ENCODE measurements at regions of chr7 and their contacts with region 1.

Region 1: DNA sequence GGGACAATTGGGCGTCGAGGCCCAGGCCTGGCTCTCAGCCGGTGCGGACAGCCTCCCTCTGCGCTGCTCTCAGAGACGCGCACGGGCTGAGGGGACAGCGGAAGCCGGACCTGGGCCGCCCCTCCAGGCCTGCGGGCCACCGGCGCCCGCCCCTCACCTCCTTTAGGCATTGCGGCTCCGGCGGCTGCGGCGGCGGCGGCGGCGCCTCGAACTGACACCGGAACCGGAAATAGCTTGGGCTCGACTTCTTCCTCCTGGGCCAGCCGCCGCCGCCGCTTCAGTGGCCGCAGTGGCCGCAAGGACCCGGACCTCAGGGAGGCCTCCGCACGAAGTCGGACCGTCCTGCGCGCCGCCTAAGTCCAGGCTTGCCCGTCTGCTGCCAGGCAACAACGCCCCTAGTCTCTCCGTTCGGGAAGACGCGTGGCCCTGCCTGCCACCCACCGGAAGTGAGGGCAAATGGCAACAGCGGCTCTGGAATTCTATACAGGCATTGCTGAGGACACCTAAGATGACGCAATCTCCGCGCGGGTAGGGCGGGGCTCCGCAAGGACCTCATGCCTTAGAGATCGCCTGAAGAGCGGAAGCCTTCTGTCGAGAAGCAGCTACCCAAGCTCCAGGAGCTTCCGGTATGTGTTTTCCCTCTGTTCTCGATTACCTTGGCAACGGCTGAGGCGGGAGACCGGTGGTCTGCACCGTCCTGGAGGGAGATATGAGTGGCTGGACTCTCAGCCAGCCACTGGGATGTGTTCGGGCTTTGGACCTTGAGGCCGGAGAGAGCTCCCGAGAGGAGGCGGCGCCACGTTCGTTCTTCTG is at the starts of genes BUD31 and PDAP1:
- DNase-seq: peak; percentile 97
- H3K4me3 Mint-ChIP-seq: peak within 1 kb of the TSS; percentile 89
- H3K27ac Mint-ChIP-seq: peak within 1 kb of the TSS; percentile 92
- H3K4me1 Mint-ChIP-seq: peaks cover 49% of the 10 kb centered on the region
- H3K27me3 Mint-ChIP-seq: no peaks in the 10 kb centered on the region
- total RNA-seq, gene BUD31: 160 to 176 TPM
- total RNA-seq, gene PDAP1: 169 to 194 TPM

Region 2: GRCh38 chr7:99143853-99144672 is 264.5 kb before region 1 on chr7 and contains the start of gene SMURF1:
- CTCF ChIA-PET with region 1: no interaction called
- intact Hi-C with region 1: loop called (anchors 1 kb)
- DNase-seq: peak; percentile 69
- H3K4me3 Mint-ChIP-seq: peak within 1 kb of the TSS; percentile 90
- H3K27ac Mint-ChIP-seq: peak within 1 kb of the TSS; percentile 75
- H3K4me1 Mint-ChIP-seq: peaks cover 38% of the 10 kb centered on the region
- H3K27me3 Mint-ChIP-seq: no peaks in the 10 kb centered on the region
- total RNA-seq, gene SMURF1: 10.1 to 11.1 TPM

Region 3: DNA sequence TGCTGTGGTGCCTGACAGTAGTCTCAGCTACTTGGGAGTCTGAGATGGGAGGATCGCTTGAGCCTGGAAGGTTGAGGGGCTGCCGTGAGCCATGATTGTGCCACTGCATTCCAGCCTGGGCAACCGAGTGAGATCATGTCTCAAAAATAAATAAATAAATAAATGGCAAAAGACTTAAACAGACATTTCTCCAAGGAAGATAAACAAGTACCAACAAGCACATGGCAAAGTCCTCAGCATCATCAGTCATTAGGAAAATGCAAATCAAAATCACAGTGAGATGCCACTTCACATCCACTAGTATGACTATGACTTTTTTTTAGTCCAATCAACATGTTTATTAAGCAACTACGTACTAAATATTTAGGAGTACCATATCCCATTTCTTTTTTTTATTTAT is 179.4 kb before region 1 on chr7:
- CTCF ChIA-PET with region 1: no interaction called
- intact Hi-C with region 1: no loop called
- DNase-seq: no peak
- H3K4me3 Mint-ChIP-seq: no peak overlapping the region
- H3K27ac Mint-ChIP-seq: no peak overlapping the region
- H3K4me1 Mint-ChIP-seq: peaks cover 2% of the 10 kb centered on the region
- H3K27me3 Mint-ChIP-seq: no peaks in the 10 kb centered on the region

Region 4: GRCh38 chr7:99374103-99375064 is 34.2 kb before region 1 on chr7 and contains the start of gene ARPC1B:
- CTCF ChIA-PET with region 1: no interaction called
- intact Hi-C with region 1: loop called (anchors 1 kb)
- DNase-seq: peak; percentile 88
- H3K4me3 Mint-ChIP-seq: peak within 1 kb of the TSS; percentile 79
- H3K27ac Mint-ChIP-seq: peak within 1 kb of the TSS; percentile 87
- H3K4me1 Mint-ChIP-seq: peaks cover 24% of the 10 kb centered on the region
- H3K27me3 Mint-ChIP-seq: no peaks in the 10 kb centered on the region
- total RNA-seq, gene ARPC1B: 334 to 345 TPM

Region 5: GRCh38 chr7:99438573-99439480 is 30.2 kb after region 1 on chr7 and contains the starts of genes CPSF4 and PTCD1:
- CTCF ChIA-PET with region 1: no interaction called
- intact Hi-C with region 1: loop called (anchors 1 kb)
- DNase-seq: peak; percentile 95
- H3K4me3 Mint-ChIP-seq: peak within 1 kb of the TSS; percentile 98
- H3K27ac Mint-ChIP-seq: peak within 1 kb of the TSS; percentile 94
- H3K4me1 Mint-ChIP-seq: peaks cover 43% of the 10 kb centered on the region
- H3K27me3 Mint-ChIP-seq: no peaks in the 10 kb centered on the region
- total RNA-seq, gene CPSF4: 70.6 to 73.5 TPM
- total RNA-seq, gene PTCD1: 3.5 to 5.1 TPM

Region 6: GRCh38 chr7:99558306-99559174 is 150.0 kb after region 1 on chr7 and contains the start of gene ZNF655:
- CTCF ChIA-PET with region 1: interaction called, 3 read pairs
- intact Hi-C with region 1: loop called (anchors 5 kb)
- DNase-seq: peak; percentile 89
- H3K4me3 Mint-ChIP-seq: peak within 1 kb of the TSS; percentile 91
- H3K27ac Mint-ChIP-seq: peak within 1 kb of the TSS; percentile 96
- H3K4me1 Mint-ChIP-seq: peaks cover 53% of the 10 kb centered on the region
- H3K27me3 Mint-ChIP-seq: no peaks in the 10 kb centered on the region
- total RNA-seq, gene ZNF655: 35.8 to 39.6 TPM

Region 7: GRCh38 chr7:100081535-100082102 is 673.0 kb after region 1 on chr7 and contains the start of gene ZNF3:
- CTCF ChIA-PET with region 1: no interaction called
- intact Hi-C with region 1: loop called (anchors 1 kb)
- DNase-seq: peak; percentile 99
- H3K4me3 Mint-ChIP-seq: peak within 1 kb of the TSS; percentile 88
- H3K27ac Mint-ChIP-seq: peak within 1 kb of the TSS; percentile 86
- H3K4me1 Mint-ChIP-seq: peaks cover 29% of the 10 kb centered on the region
- H3K27me3 Mint-ChIP-seq: no peaks in the 10 kb centered on the region
- total RNA-seq, gene ZNF3: 13.1 to 14.0 TPM